Right ventricle myocardium superior (tissue), 1 donor: ENCODE measurements at regions of chr2 and their contacts with region 1.

Region 1: DNA sequence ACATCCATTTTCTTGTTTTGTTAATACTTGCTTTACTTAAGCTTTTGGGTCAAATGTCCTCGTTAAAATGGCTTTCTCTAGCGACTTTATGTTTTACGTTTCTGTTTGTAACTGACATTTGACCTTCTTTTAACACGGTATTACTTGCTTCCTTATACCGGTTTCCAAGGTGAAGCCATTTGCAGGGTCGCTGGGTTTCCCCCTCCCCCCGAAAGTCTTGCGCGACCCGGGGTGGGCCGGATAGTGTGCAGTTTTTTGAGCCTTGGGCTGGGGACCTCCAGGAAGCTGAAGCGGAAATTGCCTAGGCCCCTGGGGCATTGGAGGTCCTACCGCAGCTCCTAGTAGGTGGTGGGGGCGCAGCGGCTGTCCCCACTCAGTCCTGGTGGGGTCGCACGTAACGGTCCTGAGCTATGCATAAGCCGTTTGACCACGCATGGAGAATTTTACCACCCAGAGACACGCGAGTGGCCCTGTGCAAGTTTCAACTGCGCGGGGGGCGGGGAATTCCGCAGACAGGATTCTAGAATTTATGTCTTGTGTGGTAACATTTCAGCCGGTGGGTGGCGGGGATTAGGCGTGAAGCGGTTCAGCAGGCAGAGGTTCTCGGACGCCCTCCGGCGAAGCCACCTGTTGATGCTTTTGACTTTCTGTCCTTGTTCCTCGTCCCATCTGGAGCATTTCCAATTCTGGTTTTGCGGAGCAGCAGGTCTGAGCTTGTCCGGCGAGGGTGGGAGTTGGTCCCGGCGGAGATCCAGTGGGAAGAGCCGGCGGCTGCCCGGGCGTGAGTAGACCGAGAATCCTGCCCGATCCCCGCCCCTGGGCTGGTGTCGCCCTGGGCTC is 2.4 kb downstream of the CFLAR start:
- DNase-seq: peak; percentile 95
- ATAC-seq: peak; percentile 57

Region 2: DNA sequence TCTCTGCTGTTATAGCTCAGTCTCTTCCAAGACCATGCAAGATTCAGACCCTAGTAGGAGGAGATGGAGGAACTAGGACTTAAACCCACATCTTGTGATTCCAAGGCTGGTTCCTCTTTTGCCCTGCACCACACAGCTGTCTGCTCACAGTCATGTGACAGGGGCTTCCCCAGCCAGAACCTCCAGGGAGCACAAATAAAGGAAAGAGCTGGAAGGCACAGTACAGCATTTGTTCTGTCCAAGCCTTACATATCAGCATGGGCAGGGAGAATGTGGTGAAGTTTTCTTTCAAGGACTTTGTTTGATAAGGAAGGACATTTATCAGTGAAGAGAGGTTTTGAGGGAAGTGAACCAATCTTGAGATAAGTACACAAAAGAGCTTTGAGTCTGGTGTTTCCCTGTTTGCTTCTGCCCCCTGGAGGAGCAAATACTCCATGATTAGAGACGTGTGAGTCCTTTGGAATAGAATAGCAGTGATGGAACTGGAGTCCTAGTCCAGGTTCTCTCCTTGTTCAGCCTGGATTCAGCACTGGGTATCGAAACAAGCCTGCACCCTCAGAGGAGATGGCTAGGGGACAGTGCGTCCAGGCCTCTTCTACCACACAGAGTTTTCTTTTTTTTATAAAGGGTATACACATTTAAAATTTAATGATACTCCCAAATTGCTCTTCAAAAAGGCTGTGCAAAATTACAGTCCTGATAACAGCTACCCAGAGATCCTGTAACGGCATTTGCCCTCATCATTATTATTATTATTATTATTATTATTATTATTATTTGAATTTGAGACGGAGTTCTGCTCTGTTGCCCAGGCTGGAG is 40.0 kb after region 1 on chr2:
- intact Hi-C with region 1: loop called (anchors 5 kb)
- DNase-seq: peak; percentile 77
- ATAC-seq: peak; percentile 80

Region 3: GRCh38 chr2:201568217-201568820 is 450.0 kb after region 1 on chr2:
- intact Hi-C with region 1: no loop called
- DNase-seq: no peak
- ATAC-seq: no peak